ENCODE measurements at regions of chr15 and their contacts with region 1.

Region 1: DNA sequence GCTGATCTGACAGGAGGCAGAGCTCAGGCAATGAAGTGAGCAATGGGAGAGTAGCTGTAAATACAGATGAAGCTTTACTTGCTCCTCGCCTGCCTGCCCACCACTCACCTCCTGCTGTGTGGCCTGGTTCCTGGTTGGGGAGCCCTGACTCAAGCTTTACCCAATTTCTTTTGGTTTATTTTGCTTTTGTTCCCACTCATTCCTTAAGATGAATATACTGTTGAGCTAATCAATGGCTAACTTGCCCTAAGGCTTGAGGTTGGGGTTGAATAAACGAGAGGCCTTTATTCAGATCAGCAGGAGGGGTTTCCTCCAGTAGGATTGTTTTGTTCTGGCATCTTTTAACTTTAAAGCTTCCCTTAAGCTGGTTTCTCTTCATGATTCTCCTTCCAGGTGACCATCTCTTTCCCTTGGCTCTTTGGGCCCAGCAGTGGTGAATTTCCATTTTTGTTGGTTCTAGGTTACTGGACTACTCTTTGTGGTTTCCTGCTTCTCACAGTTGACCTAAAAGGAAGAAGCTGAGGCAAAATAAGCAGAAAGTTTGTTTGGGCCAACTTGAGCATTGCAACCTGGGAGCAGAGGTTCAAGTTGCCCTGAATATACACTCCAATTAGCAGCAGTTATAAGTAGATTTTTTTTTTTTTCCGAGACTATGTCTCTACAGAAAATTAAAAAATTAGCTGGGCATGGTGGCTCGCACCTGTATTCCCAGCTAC is 44.4 kb downstream of the STARD9 start:
- DNase-seq: peak; percentile 77
- ATAC-seq: peak; percentile 91
- H3K4me3 Mint-ChIP-seq: peak overlapping the region; percentile 22
- H3K27ac Mint-ChIP-seq: peak overlapping the region; percentile 91
- H3K4me1 Mint-ChIP-seq: peaks cover 26% of the 10 kb centered on the region
- H3K27me3 Mint-ChIP-seq: no peaks in the 10 kb centered on the region
- CTCF ChIP-seq: no peak

Region 2: DNA sequence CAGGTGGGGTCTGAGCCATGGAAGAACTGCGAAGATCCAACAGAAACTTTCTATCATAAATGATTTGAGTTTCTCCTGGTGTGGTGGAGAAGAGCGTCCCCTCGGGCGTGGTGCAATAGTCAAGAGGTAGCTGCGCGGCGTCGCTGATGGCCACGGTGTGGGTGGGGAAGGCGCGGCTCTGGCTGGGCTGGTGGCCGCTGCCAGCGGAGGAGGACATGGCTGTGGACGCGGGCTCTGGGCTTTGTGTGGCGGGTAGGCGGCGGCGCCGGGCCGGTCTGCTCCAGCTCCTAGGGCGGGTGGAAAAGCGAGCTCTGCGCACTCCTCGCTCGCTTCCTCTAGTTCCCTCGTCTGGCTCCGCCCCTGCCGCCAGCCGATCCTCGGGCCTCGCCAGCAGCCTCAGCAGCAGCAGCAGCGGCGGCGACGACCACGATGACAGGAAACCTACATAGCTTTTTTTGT is 38.5 kb before region 1 on chr15:
- CTCF ChIA-PET with region 1: interaction called, 10 read pairs
- POLR2A ChIA-PET with region 1: no interaction called
- DNase-seq: peak; percentile 89
- ATAC-seq: peak; percentile 97
- H3K4me3 Mint-ChIP-seq: peak overlapping the region; percentile 72
- H3K27ac Mint-ChIP-seq: peak overlapping the region; percentile 16
- H3K4me1 Mint-ChIP-seq: peaks cover 37% of the 10 kb centered on the region
- H3K27me3 Mint-ChIP-seq: peaks cover 71% of the 10 kb centered on the region
- CTCF ChIP-seq: no peak

Measured in WTC11 (cell line).